ENCODE measurements at regions of chr17 and their contacts with region 1.

Region 1: DNA sequence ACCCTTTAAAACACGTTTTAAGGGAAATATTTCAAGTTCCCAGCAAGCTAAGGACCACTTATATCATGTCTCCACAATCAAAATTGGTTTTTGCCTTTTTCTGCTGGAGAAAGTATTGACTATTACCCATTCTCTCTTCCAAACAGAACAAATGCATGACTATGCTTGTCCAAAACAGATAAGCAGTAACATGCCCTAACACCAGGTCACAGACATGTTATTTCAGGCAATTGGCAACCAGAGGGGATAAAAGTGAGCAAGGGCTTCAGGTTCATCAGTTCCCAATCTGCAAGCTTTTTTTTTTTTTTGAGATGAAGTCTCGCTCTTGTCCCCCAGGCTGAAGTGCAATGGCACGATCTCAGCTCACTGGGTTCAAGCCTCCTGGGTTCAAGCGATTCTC is 15.0 kb downstream of the SKA2 start:
- DNase-seq: no peak
- H3K4me3 ChIP-seq: no peak overlapping the region
- H3K27ac ChIP-seq: no peak overlapping the region
- H3K4me1 ChIP-seq: no peaks in the 10 kb centered on the region
- H3K27me3 ChIP-seq: no peaks in the 10 kb centered on the region
- CTCF ChIP-seq: no peak

Region 2: DNA sequence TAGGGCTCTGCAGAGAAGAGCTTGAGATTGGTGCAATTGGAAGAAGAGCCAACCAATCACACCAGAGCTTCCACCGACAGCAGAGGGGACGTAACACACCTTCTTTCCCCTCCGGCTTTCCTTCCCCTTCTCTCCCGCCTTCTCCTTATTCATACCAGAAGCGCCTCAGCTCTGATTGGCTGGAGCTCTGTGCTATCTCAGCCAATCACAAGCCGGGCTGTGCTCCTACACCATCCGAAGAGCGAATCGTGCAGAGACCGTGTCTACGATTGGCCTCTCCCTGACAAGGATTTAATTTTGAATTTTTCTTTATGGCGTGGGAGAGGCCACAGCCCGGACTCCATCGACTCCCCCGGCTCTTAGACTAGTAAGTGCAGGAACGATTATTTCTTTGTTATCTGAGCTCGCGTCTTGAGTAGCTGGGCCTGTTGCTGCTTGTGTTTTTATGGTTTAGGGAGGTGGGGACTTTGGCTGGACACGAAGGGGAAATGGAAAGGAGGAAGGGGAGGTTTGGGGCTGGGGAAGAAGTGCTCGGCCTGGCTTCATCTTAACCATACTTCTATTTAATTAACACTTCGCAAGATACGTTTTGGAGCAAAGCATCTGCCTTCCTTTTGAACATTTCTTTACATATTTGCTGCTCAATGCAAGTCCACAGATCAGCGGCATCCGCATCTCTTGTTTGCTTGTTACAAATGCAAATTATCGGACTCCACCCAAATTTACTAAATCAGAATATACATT is 15.7 kb after region 1 on chr17 and contains the start of gene PRR11:
- CTCF ChIA-PET with region 1: no interaction called
- POLR2A ChIA-PET with region 1: interaction called, 14 read pairs
- intact Hi-C with region 1: no loop called
- DNase-seq: peak; percentile 94 to 100
- H3K4me3 ChIP-seq: peak within 1 kb of the TSS; percentile 80
- H3K27ac ChIP-seq: peak within 1 kb of the TSS; percentile 71
- H3K4me1 ChIP-seq: peaks cover 50% of the 10 kb centered on the region
- H3K27me3 ChIP-seq: no peaks in the 10 kb centered on the region
- CTCF ChIP-seq: no peak
- total RNA-seq, gene PRR11: 87.9 and 109 TPM in 2 replicates

Region 3: DNA sequence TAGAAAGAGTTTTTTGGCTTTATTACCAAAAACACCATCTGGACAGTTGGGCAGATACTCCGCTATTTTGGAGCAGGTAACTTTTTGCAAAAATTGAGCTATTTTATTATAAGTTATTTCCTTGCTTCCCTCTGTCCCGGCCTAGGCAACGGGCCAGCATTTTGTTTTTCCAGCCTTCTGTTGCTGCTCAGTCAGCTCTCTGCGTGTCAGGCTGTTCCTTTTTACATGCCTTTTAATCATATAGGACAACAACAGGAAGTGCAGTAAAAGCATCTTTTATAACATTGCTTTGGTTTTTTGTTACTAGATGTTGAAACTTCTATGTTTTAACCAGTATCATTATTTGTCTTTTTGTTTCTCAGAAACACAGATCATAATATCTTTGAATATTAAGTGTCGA is 1490.4 kb after region 1 on chr17:
- CTCF ChIA-PET with region 1: interaction called, 17 read pairs
- POLR2A ChIA-PET with region 1: no interaction called
- intact Hi-C with region 1: no loop called
- DNase-seq: no peak
- H3K4me3 ChIP-seq: no peak overlapping the region
- H3K27ac ChIP-seq: no peak overlapping the region
- H3K4me1 ChIP-seq: no peaks in the 10 kb centered on the region
- H3K27me3 ChIP-seq: no peaks in the 10 kb centered on the region
- CTCF ChIP-seq: no peak